ENCODE measurements at regions of chr12 and their contacts with region 1.

Region 1: GRCh38 chr12:71938728-71939385 is at the start of gene TPH2:
- DNase-seq: peak; percentile 77
- H3K4me3 ChIP-seq: no peak within 1 kb of the TSS
- H3K27ac ChIP-seq: no peak within 1 kb of the TSS
- H3K4me1 ChIP-seq: no peaks in the 10 kb centered on the region
- CTCF ChIP-seq: peak; percentile 85
- total RNA-seq, gene TPH2: not detected in 2 replicates

Region 2: DNA sequence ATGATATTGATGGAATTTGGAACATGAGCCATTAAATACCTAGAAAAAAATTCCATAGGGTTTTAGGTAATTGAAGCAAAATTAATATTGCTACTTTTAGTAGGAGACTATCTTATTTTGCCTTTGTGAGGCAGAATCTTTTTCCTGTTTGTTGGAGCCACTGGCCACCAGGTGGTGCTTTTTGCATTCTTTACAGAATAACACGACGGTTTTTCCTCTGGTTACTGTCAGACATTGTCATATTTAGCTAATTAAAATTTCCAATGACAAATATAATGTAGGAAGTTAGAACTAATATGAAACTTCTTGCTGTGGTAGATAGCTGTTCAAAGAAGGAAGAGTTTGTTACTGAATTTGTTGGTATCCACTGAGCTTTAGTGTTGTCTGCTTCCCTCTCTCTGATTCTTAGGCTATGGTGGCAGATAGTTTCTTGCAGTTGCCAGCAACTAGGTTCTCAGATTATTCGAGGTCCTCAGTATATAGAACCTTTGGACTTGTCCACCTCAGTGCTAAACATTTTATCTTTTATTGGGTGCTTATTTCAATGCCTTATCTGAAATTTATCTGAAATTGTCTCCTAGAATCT is 158.5 kb before region 1 on chr12:
- CTCF ChIA-PET with region 1: no interaction called
- POLR2A ChIA-PET with region 1: no interaction called
- intact Hi-C with region 1: loop called (anchors 2 kb)
- DNase-seq: peak; percentile 55
- H3K4me3 ChIP-seq: no peak overlapping the region
- H3K27ac ChIP-seq: no peak overlapping the region
- H3K4me1 ChIP-seq: no peaks in the 10 kb centered on the region
- CTCF ChIP-seq: peak; percentile 97

Region 3: DNA sequence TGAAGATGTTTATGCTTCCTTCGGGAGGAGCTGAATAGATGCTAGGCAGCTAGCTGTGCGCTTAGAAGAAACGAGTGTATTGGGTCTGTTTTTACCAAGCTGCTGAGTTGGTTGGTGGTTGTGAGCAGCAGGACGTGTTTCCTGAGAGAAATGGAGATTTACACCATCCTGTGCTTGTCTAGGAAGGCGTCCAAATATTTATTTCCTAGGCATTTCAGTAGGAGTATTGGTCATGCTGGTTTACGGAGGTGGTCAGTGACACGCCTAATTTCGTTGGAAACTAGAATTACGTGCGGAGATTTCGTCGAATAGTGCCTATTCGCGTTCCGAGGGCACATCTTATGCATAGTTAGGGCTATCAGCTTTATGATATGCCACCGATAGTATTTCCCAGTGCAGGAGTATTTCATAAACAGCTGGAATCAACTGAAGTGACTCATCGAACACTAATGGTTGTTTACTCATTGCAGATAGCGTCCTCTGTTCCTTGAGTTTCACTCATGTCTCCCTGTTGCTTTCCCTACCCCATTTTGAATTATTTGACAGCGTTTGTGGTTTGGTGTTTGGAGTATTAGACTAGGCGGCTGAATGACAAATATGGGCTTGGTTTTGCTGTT is 98.5 kb before region 1 on chr12:
- CTCF ChIA-PET with region 1: no interaction called
- POLR2A ChIA-PET with region 1: no interaction called
- intact Hi-C with region 1: no loop called
- DNase-seq: no peak
- H3K4me3 ChIP-seq: peak overlapping the region; percentile 81
- H3K27ac ChIP-seq: peak overlapping the region; percentile 76
- H3K4me1 ChIP-seq: peaks cover 29% of the 10 kb centered on the region
- CTCF ChIP-seq: peak; percentile 20; the same call in 1 of the 2 replicates

Region 4: DNA sequence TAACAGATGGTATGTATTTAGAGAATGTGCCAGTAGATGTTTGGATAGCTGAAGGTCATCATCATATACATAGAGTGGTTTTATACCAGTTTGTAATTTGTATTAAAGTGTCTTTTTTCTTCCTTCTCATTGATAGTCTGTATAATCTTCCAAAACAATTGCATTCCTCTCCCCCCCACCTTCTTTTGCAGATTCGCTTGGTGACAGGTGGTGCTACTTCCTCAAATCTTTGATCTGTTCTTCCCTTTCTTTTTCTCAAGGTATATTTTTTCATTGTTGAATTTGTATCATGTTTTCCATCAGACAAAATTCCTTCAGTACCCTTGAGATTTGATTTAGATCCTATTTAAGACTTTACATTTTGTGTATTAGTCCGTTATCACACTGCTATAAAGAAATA is 84.3 kb before region 1 on chr12:
- CTCF ChIA-PET with region 1: no interaction called
- POLR2A ChIA-PET with region 1: no interaction called
- intact Hi-C with region 1: no loop called
- DNase-seq: no peak
- H3K4me3 ChIP-seq: no peak overlapping the region
- H3K27ac ChIP-seq: no peak overlapping the region
- H3K4me1 ChIP-seq: peaks cover 5% of the 10 kb centered on the region
- CTCF ChIP-seq: no peak

Region 5: DNA sequence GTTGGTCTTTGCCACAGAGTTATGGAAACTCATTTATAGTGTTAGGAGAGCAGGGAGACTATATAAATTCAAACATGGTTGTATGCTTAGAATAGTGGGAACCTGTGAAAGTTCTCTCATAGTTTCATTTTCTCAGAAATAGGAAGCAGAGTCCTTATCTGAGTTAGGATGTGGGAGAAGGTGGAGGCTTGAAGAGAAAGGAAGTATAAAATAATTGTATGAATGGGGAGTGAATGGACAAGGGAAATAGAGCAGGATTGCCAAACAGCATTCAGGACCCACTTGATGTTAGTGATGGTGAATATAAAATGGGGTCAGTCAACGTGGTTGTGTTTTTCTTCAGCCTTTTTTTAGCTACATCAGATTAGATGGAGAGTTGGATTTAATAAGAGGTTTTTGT is 34.2 kb before region 1 on chr12:
- CTCF ChIA-PET with region 1: no interaction called
- POLR2A ChIA-PET with region 1: no interaction called
- intact Hi-C with region 1: no loop called
- DNase-seq: no peak
- H3K4me3 ChIP-seq: no peak overlapping the region
- H3K27ac ChIP-seq: no peak overlapping the region
- H3K4me1 ChIP-seq: no peaks in the 10 kb centered on the region
- CTCF ChIP-seq: no peak

Region 6: DNA sequence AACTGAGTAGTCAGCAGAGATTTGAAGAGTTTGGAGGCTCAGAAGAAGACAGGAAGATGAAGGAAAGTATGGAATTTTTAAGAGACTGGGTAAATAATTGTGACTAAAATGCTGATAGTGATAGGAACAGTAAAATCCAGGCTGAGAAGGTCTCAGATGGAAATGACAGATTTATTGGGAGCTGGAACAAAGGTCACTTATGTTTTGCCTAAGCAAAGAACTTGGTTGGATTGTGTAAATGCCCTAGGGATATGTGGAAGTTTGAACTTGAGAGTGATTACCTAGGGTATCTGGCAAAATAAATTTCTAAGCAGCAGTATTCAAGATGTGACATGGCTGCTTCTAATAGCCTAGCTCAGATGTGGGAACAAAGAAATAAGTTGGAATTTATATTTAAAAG is 514.2 kb after region 1 on chr12:
- CTCF ChIA-PET with region 1: no interaction called
- POLR2A ChIA-PET with region 1: no interaction called
- intact Hi-C with region 1: no loop called
- DNase-seq: no peak
- H3K4me3 ChIP-seq: no peak overlapping the region
- H3K27ac ChIP-seq: no peak overlapping the region
- H3K4me1 ChIP-seq: no peaks in the 10 kb centered on the region
- CTCF ChIP-seq: no peak